ENCODE measurements at regions of chr1 and their contacts with region 1.

Region 1: DNA sequence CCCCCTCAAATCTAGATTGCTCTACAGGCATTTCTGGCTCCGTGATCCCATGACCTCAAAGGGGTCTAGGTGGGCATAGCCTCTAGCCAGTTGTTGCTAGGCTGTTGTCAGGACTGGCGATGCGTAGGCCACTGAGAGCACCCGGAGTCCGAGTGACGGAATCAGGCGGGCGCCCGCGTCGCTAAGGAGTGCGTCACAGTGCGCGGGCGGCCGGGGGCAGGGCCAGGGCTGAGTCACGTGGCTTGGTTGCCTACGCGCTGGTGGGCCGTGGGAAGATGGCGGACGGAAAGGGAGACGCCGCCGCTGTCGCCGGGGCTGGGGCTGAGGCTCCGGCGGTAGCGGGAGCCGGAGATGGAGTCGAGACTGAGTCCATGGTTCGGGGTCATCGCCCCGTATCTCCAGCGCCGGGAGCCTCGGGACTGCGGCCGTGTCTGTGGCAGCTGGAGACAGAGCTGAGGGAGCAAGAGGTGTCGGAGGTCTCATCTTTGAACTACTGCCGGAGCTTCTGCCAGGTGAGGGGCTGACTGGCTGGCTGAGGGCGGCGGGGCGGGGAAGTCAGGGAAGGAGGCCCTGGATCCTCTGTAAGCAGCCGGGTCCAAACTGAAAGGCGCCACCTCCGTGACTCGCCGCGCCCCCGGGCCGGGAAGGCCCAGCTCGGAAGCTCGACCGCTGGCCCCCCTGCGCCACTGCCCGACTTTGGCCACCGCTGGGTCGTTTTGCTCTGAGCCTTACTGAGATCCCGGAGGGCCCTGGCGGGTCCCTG is at the start of gene RLF:
- DNase-seq: peak; percentile 97
- ATAC-seq: peak; percentile 90
- H3K4me3 Mint-ChIP-seq: no peak within 1 kb of the TSS
- H3K27ac Mint-ChIP-seq: no peak within 1 kb of the TSS
- H3K4me1 Mint-ChIP-seq: peaks cover 5% of the 10 kb centered on the region
- H3K27me3 Mint-ChIP-seq: no peaks in the 10 kb centered on the region
- CTCF ChIP-seq: no peak
- total RNA-seq, gene RLF: 21.2 to 21.3 TPM

Region 2: GRCh38 chr1:39940252-39940651 is 221.1 kb before region 1 on chr1:
- CTCF ChIA-PET with region 1: no interaction called
- POLR2A ChIA-PET with region 1: no interaction called
- intact Hi-C with region 1: no loop called
- DNase-seq: no peak
- ATAC-seq: no peak
- H3K4me3 Mint-ChIP-seq: no peak overlapping the region
- H3K27ac Mint-ChIP-seq: no peak overlapping the region
- H3K4me1 Mint-ChIP-seq: peaks cover 4% of the 10 kb centered on the region
- H3K27me3 Mint-ChIP-seq: peaks cover 1% of the 10 kb centered on the region
- CTCF ChIP-seq: no peak

Region 3: GRCh38 chr1:40122855-40123254 is 38.5 kb before region 1 on chr1:
- CTCF ChIA-PET with region 1: no interaction called
- POLR2A ChIA-PET with region 1: no interaction called
- intact Hi-C with region 1: no loop called
- DNase-seq: no peak
- ATAC-seq: no peak
- H3K4me3 Mint-ChIP-seq: no peak overlapping the region
- H3K27ac Mint-ChIP-seq: no peak overlapping the region
- H3K4me1 Mint-ChIP-seq: no peaks in the 10 kb centered on the region
- H3K27me3 Mint-ChIP-seq: peaks cover 4% of the 10 kb centered on the region
- CTCF ChIP-seq: no peak

Region 4: GRCh38 chr1:40257688-40258444 is 96.6 kb after region 1 on chr1 and contains the start of gene ZMPSTE24:
- CTCF ChIA-PET with region 1: no interaction called
- POLR2A ChIA-PET with region 1: interaction called, 8 read pairs
- intact Hi-C with region 1: loop called (anchors 10 kb)
- DNase-seq: peak; percentile 98
- ATAC-seq: peak; percentile 97
- H3K4me3 Mint-ChIP-seq: peak within 1 kb of the TSS; percentile 94
- H3K27ac Mint-ChIP-seq: peak within 1 kb of the TSS; percentile 98
- H3K4me1 Mint-ChIP-seq: peaks cover 48% of the 10 kb centered on the region
- H3K27me3 Mint-ChIP-seq: no peaks in the 10 kb centered on the region
- CTCF ChIP-seq: no peak
- total RNA-seq, gene ZMPSTE24: 20.1 to 21.2 TPM